ENCODE measurements at regions of chr12 and their contacts with region 1.

Region 1: GRCh38 chr12:15563663-15564062 is 225.5 kb downstream of the EPS8 start:
- DNase-seq: no peak
- ATAC-seq: peak; percentile 54
- H3K4me3 Mint-ChIP-seq: peak overlapping the region; percentile 74
- H3K27ac Mint-ChIP-seq: peak overlapping the region; percentile 92
- H3K4me1 Mint-ChIP-seq: peaks cover 47% of the 10 kb centered on the region
- H3K27me3 Mint-ChIP-seq: peaks cover 4% of the 10 kb centered on the region

Region 2: GRCh38 chr12:15532364-15532977 is 31.2 kb before region 1 on chr12:
- POLR2A ChIA-PET with region 1: interaction called, 20 read pairs
- DNase-seq: no peak
- ATAC-seq: peak; percentile 50
- H3K4me3 Mint-ChIP-seq: peak overlapping the region; percentile 37
- H3K27ac Mint-ChIP-seq: no peak overlapping the region
- H3K4me1 Mint-ChIP-seq: peaks cover 12% of the 10 kb centered on the region
- H3K27me3 Mint-ChIP-seq: peaks cover 4% of the 10 kb centered on the region

Region 3: GRCh38 chr12:15546102-15546701 is 17.5 kb before region 1 on chr12:
- POLR2A ChIA-PET with region 1: interaction called, 25 read pairs
- DNase-seq: no peak
- ATAC-seq: peak; percentile 87
- H3K4me3 Mint-ChIP-seq: peak overlapping the region; percentile 46
- H3K27ac Mint-ChIP-seq: peak overlapping the region; percentile 78
- H3K4me1 Mint-ChIP-seq: peaks cover 29% of the 10 kb centered on the region
- H3K27me3 Mint-ChIP-seq: no peaks in the 10 kb centered on the region

Region 4: DNA sequence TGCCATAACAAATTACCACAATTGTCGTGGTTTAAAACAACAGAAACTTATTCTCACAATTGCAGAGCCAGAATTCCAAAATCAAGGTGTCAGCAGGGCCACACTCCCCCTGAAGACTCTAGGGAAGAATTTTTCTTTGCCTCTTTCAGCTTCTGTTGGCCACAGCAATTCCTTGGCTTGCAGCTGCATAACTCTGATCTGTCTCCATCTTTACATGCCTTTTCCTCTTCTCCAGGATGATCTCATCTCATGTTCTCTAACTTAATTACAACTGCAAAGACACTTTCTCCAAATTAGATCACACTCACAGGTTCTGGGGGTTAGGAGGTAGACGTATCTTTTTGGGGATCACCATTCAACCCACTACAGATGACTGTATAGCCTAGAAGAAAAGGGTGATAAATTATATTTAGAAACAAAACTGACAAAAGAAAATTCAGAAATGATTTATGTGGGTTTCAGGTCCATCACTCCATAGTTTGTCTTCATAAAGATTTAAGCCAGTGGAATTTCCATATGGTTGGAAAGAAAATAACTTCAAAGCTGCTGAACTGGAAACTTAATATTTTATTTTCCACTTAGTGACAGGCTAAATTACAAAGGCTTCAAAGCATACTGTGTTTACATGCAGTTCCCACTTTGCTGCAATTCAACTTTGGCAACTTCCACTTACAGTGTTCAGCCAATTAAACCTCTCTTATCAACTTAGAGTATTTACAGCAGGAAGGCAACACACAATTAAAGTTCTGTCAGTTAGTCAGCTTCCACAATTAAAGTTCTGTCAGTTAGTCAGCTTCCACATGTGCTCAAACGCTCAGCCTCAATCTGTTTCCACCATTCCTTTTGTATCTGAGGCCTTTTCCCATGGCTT is 12.2 kb after region 1 on chr12:
- POLR2A ChIA-PET with region 1: interaction called, 19 read pairs
- DNase-seq: no peak
- ATAC-seq: no peak
- H3K4me3 Mint-ChIP-seq: no peak overlapping the region
- H3K27ac Mint-ChIP-seq: peak overlapping the region; percentile 57
- H3K4me1 Mint-ChIP-seq: peaks cover 27% of the 10 kb centered on the region
- H3K27me3 Mint-ChIP-seq: no peaks in the 10 kb centered on the region

Measured in activated naive CD8-positive, alpha-beta T cell treated with anti-CD3 and anti-CD28 coated beads, Interleukin-2, amount 10 ng/mL, durations not matched to agents 7 days and 5 days (primary cell).